Natural killer cell (primary cell): ENCODE measurements at regions of chr7 and their contacts with region 1.

Region 1: GRCh38 chr7:79308192-79308591 is 145.3 kb downstream of the MAGI2 start:
- DNase-seq: no peak
- ATAC-seq: no peak
- H3K4me3 ChIP-seq: no peak overlapping the region
- H3K4me3 Mint-ChIP-seq: no peak overlapping the region
- H3K27ac ChIP-seq: no peak overlapping the region
- H3K27ac Mint-ChIP-seq: no peak overlapping the region
- H3K4me1 ChIP-seq: no peaks in the 10 kb centered on the region
- H3K4me1 Mint-ChIP-seq: no peaks in the 10 kb centered on the region
- H3K27me3 ChIP-seq: no peaks in the 10 kb centered on the region
- H3K27me3 Mint-ChIP-seq: no peaks in the 10 kb centered on the region
- CTCF ChIP-seq: no peak

Region 2: GRCh38 chr7:79241288-79242055 is 66.7 kb before region 1 on chr7:
- intact Hi-C with region 1: loop called (anchors 10 kb)
- DNase-seq: no peak
- ATAC-seq: no peak
- H3K4me3 ChIP-seq: no peak overlapping the region
- H3K4me3 Mint-ChIP-seq: no peak overlapping the region
- H3K27ac ChIP-seq: no peak overlapping the region
- H3K27ac Mint-ChIP-seq: no peak overlapping the region
- H3K4me1 ChIP-seq: no peaks in the 10 kb centered on the region
- H3K4me1 Mint-ChIP-seq: no peaks in the 10 kb centered on the region
- H3K27me3 ChIP-seq: no peaks in the 10 kb centered on the region
- H3K27me3 Mint-ChIP-seq: no peaks in the 10 kb centered on the region
- CTCF ChIP-seq: no peak

Region 3: DNA sequence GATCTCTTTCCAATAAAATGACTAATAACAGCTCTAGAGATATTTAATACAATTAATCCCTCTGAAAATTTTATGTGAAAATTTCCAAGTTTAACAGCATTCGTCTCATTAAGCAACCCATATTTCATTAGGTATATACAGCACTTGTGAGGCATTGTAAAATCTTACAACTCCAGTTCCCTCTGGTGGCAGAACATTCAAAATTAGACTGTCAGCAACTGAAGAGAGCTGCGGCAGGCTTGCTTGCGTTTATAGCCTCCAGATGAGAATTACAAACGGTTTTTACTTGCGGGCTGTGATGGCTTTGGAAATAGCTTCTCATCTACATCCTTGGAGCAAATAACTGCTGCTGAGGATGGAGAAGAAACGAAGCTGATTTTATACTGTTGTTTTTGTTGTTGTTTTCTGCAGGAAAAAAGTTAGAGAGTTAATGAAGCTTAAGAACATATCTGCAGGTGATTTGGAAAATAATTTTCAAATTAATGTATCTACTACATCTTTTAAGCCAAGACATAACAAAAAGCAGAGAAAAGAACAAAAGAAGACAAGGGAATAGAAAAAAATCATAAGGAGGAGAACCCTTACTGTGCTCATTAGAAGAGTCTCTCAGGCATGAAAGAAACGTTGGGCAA is 26.0 kb before region 1 on chr7:
- intact Hi-C with region 1: no loop called
- DNase-seq: no peak
- ATAC-seq: no peak
- H3K4me3 ChIP-seq: no peak overlapping the region
- H3K4me3 Mint-ChIP-seq: no peak overlapping the region
- H3K27ac ChIP-seq: no peak overlapping the region
- H3K27ac Mint-ChIP-seq: no peak overlapping the region
- H3K4me1 ChIP-seq: no peaks in the 10 kb centered on the region
- H3K4me1 Mint-ChIP-seq: no peaks in the 10 kb centered on the region
- H3K27me3 ChIP-seq: no peaks in the 10 kb centered on the region
- H3K27me3 Mint-ChIP-seq: no peaks in the 10 kb centered on the region
- CTCF ChIP-seq: no peak